Ascending aorta (tissue), 2 donors: ENCODE measurements at regions of chrX and their contacts with region 1.

Region 1: DNA sequence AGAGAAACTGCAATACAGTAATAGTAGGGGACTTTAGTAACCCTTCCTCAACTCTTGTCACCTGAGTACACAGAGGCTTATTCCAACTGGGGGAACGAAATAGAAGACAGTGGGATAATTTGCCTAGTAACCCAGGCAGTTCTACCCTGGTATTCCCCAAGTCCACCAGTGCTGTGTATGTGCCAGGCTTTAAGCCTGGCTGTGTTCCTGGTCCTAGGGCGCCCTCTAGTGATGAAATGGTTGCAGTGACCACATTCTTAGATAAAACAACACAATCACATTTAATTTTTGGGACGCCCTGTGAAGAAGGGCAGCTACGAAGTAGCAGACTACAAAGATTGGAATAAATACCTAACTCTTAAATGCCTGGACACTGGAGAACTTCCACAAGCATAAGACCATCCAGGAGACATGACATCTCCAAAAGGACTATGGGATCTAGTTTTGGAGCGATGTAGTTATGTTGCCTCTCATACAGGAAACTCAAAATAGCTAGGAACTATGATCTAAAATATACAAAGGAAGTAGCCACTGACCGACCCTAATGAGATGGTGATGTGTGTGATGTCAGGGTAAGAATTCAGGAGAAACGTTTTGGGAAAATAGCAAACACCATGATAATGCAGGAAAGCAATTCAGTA is 288.5 kb upstream of the ZCCHC13 start:
- DNase-seq: peak in 1 of 2 donors; percentile 73
- H3K4me3 ChIP-seq: no peak overlapping the region
- H3K27ac ChIP-seq: no peak overlapping the region
- H3K4me1 ChIP-seq: no peaks in the 10 kb centered on the region
- H3K27me3 ChIP-seq: no peaks in the 10 kb centered on the region
- CTCF ChIP-seq: peak; percentile 66 to 78 (median 72)

Region 2: DNA sequence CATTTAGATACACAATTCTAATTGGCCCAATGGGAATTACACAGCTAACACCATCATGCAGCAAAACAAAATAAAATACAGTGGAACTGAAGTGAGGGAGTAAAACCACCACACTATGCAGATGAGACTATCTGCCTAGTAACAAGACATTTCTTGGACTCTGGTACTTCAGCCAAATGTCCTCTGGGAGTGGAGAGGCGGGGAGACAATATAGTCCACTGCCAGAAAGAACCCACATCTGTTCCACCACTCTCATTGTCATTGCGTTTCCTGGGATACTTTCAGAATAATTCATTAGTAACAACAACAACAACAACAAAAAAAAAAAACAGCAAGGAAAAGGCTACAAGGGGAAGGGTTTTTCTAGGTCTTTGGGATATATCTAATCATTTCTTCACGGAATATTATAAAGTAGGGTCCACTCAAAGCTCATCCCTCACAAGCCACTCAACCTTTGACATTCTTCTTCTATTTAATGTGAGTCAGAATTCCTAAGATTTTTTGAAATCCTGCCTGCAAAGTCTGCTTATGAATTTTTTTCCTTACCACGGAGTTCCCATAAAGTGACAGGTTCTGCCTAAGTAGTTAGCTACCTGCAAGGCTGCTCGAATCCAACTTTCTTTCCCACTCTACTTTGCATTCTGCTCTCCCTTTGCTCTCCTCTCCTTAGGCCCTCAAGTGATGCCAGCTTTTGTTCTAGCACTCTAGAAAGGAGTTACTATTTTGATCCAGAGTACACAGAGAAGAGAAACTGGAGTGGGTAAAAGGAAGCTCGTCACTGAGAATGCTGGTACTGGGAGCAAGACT is 197.9 kb before region 1 on chrX:
- intact Hi-C with region 1: no loop called
- DNase-seq: no peak
- H3K4me3 ChIP-seq: no peak overlapping the region
- H3K27ac ChIP-seq: no peak overlapping the region
- H3K4me1 ChIP-seq: no peaks in the 10 kb centered on the region
- H3K27me3 ChIP-seq: no peaks in the 10 kb centered on the region
- CTCF ChIP-seq: no peak

Region 3: GRCh38 chrX:74133156-74133796 is 117.8 kb after region 1 on chrX:
- intact Hi-C with region 1: loop called (anchors 10 kb)
- DNase-seq: no peak
- H3K4me3 ChIP-seq: no peak overlapping the region
- H3K27ac ChIP-seq: no peak overlapping the region
- H3K4me1 ChIP-seq: no peaks in the 10 kb centered on the region
- H3K27me3 ChIP-seq: no peaks in the 10 kb centered on the region
- CTCF ChIP-seq: peak; percentile 64 to 76 (median 69)